BJ (cell line): ENCODE measurements at regions of chr18 and their contacts with region 1.

Region 1: DNA sequence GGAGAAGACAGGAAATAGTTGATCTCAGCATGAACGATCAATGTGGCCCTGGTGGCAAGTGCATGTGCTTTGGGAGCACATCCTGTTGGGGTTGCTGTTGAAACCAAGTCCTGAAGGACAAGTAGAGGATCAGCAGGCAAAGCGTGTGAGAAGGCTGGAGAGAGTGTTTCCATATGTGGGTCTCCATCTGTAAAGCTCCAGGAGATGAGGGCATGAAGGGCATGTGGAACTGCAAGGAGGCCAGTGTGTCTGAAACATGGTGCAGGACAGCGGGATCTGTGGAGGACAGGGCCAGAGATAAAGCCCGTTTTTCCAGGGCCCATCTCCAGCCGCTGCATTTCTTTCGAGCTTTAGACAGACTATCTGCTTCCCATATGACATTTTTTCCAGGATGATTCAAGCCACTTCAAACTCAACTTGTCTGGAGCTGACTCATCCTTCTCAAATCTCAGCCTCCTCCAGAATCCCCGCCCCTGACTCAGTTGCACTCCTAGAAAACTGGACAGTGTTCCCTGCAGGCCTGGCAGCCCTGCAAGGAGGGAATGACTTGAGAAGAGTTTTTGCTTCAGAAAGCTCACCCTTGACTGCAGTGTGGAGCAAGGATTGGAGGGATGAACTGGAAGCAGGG is 226.1 kb downstream of the VAPA start:
- DNase-seq: peak; percentile 39
- H3K4me3 ChIP-seq: no peak overlapping the region
- H3K27me3 ChIP-seq: no peaks in the 10 kb centered on the region
- CTCF ChIP-seq: no peak

Region 2: DNA sequence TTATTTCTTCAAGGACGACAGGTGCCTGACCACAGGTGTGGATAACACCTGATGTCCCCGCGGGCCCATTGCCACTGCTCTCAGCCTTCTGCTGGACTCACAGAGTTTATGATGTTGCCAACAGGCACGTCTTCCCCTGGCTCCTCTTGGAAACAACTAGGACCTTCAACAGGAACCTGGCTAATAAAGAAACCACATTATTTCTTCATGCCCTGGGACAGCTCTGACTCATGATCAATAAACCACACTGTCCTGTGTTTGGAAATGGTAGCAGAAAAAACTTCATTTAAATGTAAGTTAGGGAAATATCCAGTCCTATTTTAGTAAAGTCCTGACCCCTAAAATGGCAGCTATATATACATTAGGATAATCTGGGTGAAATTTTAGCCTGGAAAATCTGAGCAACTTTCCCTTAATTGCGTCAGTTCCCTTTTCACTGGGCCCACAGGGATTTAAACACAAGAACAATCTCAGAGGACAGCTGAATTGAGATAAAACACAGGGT is 67.2 kb before region 1 on chr18:
- CTCF ChIA-PET with region 1: no interaction called
- POLR2A ChIA-PET with region 1: interaction called, 10 read pairs
- DNase-seq: peak; percentile 48
- H3K4me3 ChIP-seq: no peak overlapping the region
- H3K27me3 ChIP-seq: no peaks in the 10 kb centered on the region; the same call in 1 of the 2 replicates
- CTCF ChIP-seq: no peak

Region 3: DNA sequence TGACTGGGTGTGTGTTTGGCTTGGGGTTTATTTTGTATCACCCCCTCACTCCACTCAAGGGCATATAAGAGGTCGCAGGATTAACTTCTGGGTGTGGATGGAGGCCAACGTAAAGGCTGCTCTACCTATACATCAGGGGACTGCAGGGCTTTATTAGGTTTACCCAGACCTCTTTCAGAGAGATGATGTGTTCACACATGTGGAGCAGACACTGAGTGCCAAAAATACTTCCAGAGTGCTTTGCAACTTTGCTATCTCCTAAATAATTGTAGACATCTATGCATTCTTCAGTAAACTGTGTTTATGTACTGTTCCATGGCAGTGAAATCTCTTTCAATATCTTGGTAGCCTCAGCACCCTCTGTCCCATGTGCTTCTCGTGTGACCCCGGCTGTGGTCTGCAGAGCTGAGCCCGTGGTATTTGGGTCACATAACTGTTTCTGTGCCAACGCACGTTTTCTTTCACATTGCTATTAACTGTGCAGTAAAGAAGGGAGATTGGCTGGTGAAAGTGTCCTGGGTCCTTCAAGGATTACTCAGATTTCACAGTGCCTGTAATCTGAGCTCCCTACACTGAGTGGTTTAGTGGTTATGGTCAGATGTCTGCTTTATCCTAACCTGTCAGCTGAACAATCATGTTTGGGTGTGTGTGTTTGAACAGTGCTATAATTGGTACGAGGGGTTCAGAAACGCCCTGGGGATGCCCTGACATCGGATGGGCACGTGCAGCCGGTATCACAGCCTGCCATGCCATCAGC is 17.9 kb before region 1 on chr18:
- CTCF ChIA-PET with region 1: interaction called, 5 read pairs
- POLR2A ChIA-PET with region 1: interaction called, 16 read pairs
- DNase-seq: peak; percentile 97
- H3K4me3 ChIP-seq: no peak overlapping the region
- H3K27me3 ChIP-seq: no peaks in the 10 kb centered on the region
- CTCF ChIP-seq: no peak

Region 4: GRCh38 chr18:10304853-10305252 is 165.0 kb after region 1 on chr18:
- CTCF ChIA-PET with region 1: no interaction called
- POLR2A ChIA-PET with region 1: no interaction called
- DNase-seq: peak; percentile 48
- H3K4me3 ChIP-seq: no peak overlapping the region
- H3K27me3 ChIP-seq: no peaks in the 10 kb centered on the region
- CTCF ChIP-seq: no peak